Common myeloid progenitor, CD34-positive (primary cell): ENCODE measurements at regions of chr13 and their contacts with region 1.

Region 1: DNA sequence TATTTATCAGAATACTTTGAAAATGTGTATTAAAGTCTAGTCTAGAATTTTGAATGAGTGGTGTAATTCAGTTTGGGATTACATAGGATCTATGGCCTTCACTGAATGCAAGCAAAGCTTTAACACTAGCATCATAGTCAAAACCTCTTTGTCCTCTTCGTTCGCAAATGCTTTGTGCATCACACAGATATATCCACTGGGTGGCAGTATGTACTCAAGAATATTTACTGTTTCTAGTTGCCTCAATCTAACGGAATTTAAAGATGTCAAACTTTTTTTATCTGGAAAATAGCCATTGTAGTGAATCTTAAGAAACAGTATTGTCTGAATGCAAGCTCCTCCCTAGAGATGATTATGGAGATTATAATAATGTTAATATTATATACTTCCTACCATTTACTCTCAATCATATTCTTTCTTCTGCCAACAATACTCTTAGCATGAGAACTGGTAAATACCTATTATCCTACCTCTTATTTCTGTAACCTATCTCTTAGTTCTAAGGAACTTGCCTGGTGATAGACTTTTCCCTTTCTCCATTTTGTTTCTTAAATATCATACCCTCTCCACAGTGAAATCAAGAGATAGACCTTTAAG is 25.8 kb downstream of the LACC1 start:
- DNase-seq: peak; percentile 65 to 81 (median 78)
- H3K4me3 ChIP-seq: no peak overlapping the region
- H3K27ac ChIP-seq: no peak overlapping the region
- H3K4me1 ChIP-seq: no peaks in the 10 kb centered on the region
- H3K27me3 ChIP-seq: no peaks in the 10 kb centered on the region

Region 2: GRCh38 chr13:43920965-43921674 is 15.6 kb after region 1 on chr13:
- CTCF ChIA-PET with region 1: interaction called, 13 read pairs
- POLR2A ChIA-PET with region 1: no interaction called
- DNase-seq: no peak
- H3K4me3 ChIP-seq: no peak overlapping the region
- H3K27ac ChIP-seq: no peak overlapping the region
- H3K4me1 ChIP-seq: no peaks in the 10 kb centered on the region
- H3K27me3 ChIP-seq: no peaks in the 10 kb centered on the region